GM10248 (cell line): ENCODE measurements at regions of chr2 and their contacts with region 1.

Region 1: GRCh38 chr2:64562148-64562784 is 38.1 kb downstream of the AFTPH start:
- DNase-seq: no peak
- CTCF ChIP-seq: peak; percentile 36

Region 2: GRCh38 chr2:64463781-64464180 is 98.5 kb before region 1 on chr2:
- CTCF ChIA-PET with region 1: no interaction called
- POLR2A ChIA-PET with region 1: no interaction called
- DNase-seq: no peak
- CTCF ChIP-seq: no peak

Region 3: GRCh38 chr2:64548761-64549160 is 13.5 kb before region 1 on chr2:
- CTCF ChIA-PET with region 1: interaction called, 23 read pairs
- POLR2A ChIA-PET with region 1: no interaction called
- DNase-seq: no peak
- CTCF ChIP-seq: no peak

Region 4: GRCh38 chr2:64622443-64623241 is 60.4 kb after region 1 on chr2:
- CTCF ChIA-PET with region 1: no interaction called
- POLR2A ChIA-PET with region 1: no interaction called
- DNase-seq: no peak
- CTCF ChIP-seq: no peak

Region 5: DNA sequence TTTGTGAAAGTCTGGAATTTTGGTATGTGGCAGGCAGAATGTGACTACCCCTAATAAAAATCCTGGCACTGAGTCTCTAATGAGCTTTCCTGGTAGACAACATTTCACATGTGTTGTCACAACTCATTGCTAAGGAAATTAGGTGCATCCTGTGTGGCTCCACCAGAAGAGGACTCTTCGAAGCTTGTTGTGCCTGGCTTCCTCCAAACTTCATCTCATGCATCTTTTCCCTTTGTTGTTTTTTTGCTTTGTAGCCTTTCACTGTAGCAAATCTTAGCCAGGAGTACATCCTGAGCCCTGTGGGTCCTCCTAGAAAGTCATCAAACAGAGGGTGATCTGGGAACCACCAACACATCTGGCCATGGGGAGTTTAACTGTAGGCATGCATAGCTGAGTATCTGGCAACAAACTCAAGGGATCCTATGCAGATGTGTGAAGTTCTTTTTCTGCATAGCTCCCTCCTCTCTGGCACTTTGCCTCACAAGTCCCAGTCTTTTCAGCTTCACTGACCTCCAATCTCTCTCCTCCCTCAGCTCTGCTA is 133.5 kb after region 1 on chr2:
- CTCF ChIA-PET with region 1: no interaction called
- POLR2A ChIA-PET with region 1: no interaction called
- DNase-seq: no peak
- CTCF ChIP-seq: no peak